GM13977 (cell line): ENCODE measurements at regions of chr10 and their contacts with region 1.

Region 1: GRCh38 chr10:97792141-97792721 is 20.4 kb upstream of the SFRP5 start:
- DNase-seq: peak; percentile 82
- CTCF ChIP-seq: peak; percentile 98

Region 2: GRCh38 chr10:97463363-97464132 is 328.7 kb before region 1 on chr10:
- in situ Hi-C with region 1: no loop called
- DNase-seq: peak; percentile 48
- CTCF ChIP-seq: peak; percentile 76

Region 3: GRCh38 chr10:97869091-97870042 is 77.1 kb after region 1 on chr10:
- in situ Hi-C with region 1: loop called (anchors 10 kb)
- DNase-seq: peak; percentile 82
- CTCF ChIP-seq: peak; percentile 58